ENCODE measurements at regions of chr7 and their contacts with region 1.

Region 1: GRCh38 chr7:100691676-100692577 is 2.1 kb downstream of the GIGYF1 start:
- DNase-seq: peak; percentile 82
- ATAC-seq: peak; percentile 74
- H3K4me3 Mint-ChIP-seq: peak overlapping the region; percentile 96
- H3K27ac Mint-ChIP-seq: peak overlapping the region; percentile 34
- H3K4me1 Mint-ChIP-seq: peaks cover 24% of the 10 kb centered on the region
- H3K27me3 Mint-ChIP-seq: peaks cover 9% of the 10 kb centered on the region

Region 2: GRCh38 chr7:100632951-100633717 is 58.8 kb before region 1 on chr7:
- POLR2A ChIA-PET with region 1: interaction called, 16 read pairs
- DNase-seq: peak; percentile 73
- ATAC-seq: peak; percentile 71
- H3K4me3 Mint-ChIP-seq: peak overlapping the region; percentile 87
- H3K27ac Mint-ChIP-seq: peak overlapping the region; percentile 87
- H3K4me1 Mint-ChIP-seq: peaks cover 31% of the 10 kb centered on the region
- H3K27me3 Mint-ChIP-seq: peaks cover 12% of the 10 kb centered on the region

Region 3: GRCh38 chr7:100662377-100662776 is 29.6 kb before region 1 on chr7:
- POLR2A ChIA-PET with region 1: no interaction called
- DNase-seq: no peak
- ATAC-seq: no peak
- H3K4me3 Mint-ChIP-seq: no peak overlapping the region
- H3K27ac Mint-ChIP-seq: no peak overlapping the region
- H3K4me1 Mint-ChIP-seq: peaks cover 5% of the 10 kb centered on the region
- H3K27me3 Mint-ChIP-seq: peaks cover 22% of the 10 kb centered on the region

Region 4: GRCh38 chr7:100673300-100673941 is 18.5 kb before region 1 on chr7 and contains the start of gene GNB2:
- POLR2A ChIA-PET with region 1: interaction called, 24 read pairs
- DNase-seq: peak; percentile 100
- ATAC-seq: peak; percentile 64
- H3K4me3 Mint-ChIP-seq: peak within 1 kb of the TSS; percentile 98
- H3K27ac Mint-ChIP-seq: peak within 1 kb of the TSS; percentile 95
- H3K4me1 Mint-ChIP-seq: peaks cover 16% of the 10 kb centered on the region
- H3K27me3 Mint-ChIP-seq: peaks cover 7% of the 10 kb centered on the region
- total RNA-seq, gene GNB2: 203 to 216 TPM

Region 5: DNA sequence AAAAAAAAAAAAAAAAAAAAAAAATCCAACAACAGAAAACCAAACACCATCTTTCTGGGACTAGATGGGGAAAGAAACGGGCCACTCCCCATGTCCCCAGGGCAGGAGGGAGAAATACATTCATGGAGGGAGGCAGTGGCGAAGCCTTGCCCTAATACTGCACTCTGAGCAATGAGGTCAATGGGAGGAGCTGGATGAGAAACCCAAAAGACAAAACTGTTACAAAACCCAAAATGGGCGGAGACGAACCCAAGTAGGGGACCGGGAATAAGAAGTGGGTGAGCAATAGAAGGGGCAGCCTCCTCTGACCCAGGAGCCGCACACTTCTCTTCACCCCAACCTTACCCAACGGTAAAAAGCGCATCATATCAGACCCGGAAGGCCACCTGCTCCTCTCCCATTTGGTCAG is 11.8 kb before region 1 on chr7:
- POLR2A ChIA-PET with region 1: interaction called, 24 read pairs
- DNase-seq: no peak
- ATAC-seq: no peak
- H3K4me3 Mint-ChIP-seq: no peak overlapping the region
- H3K27ac Mint-ChIP-seq: peak overlapping the region; percentile 19
- H3K4me1 Mint-ChIP-seq: peaks cover 9% of the 10 kb centered on the region
- H3K27me3 Mint-ChIP-seq: no peaks in the 10 kb centered on the region

Region 6: GRCh38 chr7:100745184-100745583 is 53.3 kb after region 1 on chr7:
- POLR2A ChIA-PET with region 1: no interaction called
- DNase-seq: peak; percentile 51
- ATAC-seq: peak; percentile 78
- H3K4me3 Mint-ChIP-seq: peak overlapping the region; percentile 88
- H3K27ac Mint-ChIP-seq: peak overlapping the region; percentile 69
- H3K4me1 Mint-ChIP-seq: peaks cover 4% of the 10 kb centered on the region
- H3K27me3 Mint-ChIP-seq: peaks cover 22% of the 10 kb centered on the region

Region 7: GRCh38 chr7:100837099-100837836 is 145.3 kb after region 1 on chr7:
- POLR2A ChIA-PET with region 1: no interaction called
- DNase-seq: peak; percentile 73
- ATAC-seq: peak; percentile 95
- H3K4me3 Mint-ChIP-seq: peak overlapping the region; percentile 83
- H3K27ac Mint-ChIP-seq: peak overlapping the region; percentile 80
- H3K4me1 Mint-ChIP-seq: peaks cover 12% of the 10 kb centered on the region
- H3K27me3 Mint-ChIP-seq: no peaks in the 10 kb centered on the region

Measured in activated naive CD8-positive, alpha-beta T cell treated with anti-CD3 and anti-CD28 coated beads, Interleukin-2, amount 10 ng/mL, durations not matched to agents 7 days and 5 days (primary cell).